ENCODE measurements at regions of chr13 and their contacts with region 1.

Region 1: DNA sequence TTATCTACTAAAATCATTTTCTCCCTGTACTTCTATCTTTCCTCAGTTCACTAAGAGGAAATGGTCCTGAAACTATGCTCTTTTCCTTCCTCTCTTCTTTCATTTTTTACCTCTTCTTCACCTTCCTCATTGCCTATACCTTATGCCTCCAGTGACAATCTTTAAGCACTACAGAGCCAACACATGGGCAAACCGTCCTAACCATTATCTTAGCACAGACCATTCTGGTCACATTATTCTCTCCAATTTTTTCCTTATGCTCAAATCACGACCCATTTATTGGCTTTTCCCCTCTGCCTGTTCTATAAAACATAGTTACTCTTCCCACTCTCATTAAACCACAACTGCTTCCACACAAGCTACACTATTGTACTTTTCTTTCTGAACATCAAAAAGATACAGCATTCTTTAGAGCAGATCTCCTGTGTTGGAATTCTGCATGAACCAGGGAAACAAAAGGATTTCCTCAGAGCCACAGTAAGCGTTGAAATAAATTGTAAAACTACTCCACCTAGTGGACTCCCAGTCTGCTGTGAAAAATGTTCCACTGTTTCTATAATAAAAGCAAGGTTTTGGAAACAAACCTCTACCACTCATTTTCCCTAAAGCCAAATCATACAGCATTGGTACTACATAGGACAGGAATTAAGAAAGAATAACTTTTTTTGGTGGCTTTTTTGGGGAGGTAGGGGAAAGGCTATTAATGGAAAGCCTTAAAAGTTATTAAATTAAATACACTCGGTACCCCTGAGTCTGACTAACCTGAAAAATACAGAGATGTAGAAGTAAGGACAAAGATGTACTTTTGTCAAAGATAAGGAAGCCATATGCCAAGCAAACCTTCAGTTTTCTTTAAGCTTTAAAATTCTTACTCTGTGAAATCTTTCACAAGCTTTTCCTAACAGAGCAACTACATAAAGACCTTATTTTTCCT is 19.5 kb downstream of the NUFIP1 start:
- DNase-seq: no peak
- H3K4me3 ChIP-seq: no peak overlapping the region
- H3K27ac ChIP-seq: peak overlapping the region in 1 of 3 donors; percentile 41
- H3K4me1 ChIP-seq: peaks cover 3 to 9% of the 10 kb centered on the region in 2 donors
- H3K27me3 ChIP-seq: no peaks in the 10 kb centered on the region
- CTCF ChIP-seq: peak; percentile 57 to 86 (median 75)
- POLR2A ChIP-seq: no peak

Region 2: GRCh38 chr13:44362394-44363040 is 607.3 kb before region 1 on chr13:
- intact Hi-C with region 1: no loop called
- DNase-seq: no peak
- H3K4me3 ChIP-seq: no peak overlapping the region
- H3K27ac ChIP-seq: no peak overlapping the region
- H3K4me1 ChIP-seq: no peaks in the 10 kb centered on the region
- H3K27me3 ChIP-seq: no peaks in the 10 kb centered on the region
- CTCF ChIP-seq: no peak
- POLR2A ChIP-seq: no peak

Region 3: GRCh38 chr13:44917589-44918325 is 52.1 kb before region 1 on chr13:
- intact Hi-C with region 1: loop called (anchors 10 kb)
- DNase-seq: peak; percentile 95 to 97
- H3K4me3 ChIP-seq: peak overlapping the region; percentile 23 to 77 (median 29)
- H3K27ac ChIP-seq: peak overlapping the region; percentile 95 to 100 (median 99)
- H3K4me1 ChIP-seq: peaks cover 29 to 30% of the 10 kb centered on the region in 2 donors
- H3K27me3 ChIP-seq: no peaks in the 10 kb centered on the region
- CTCF ChIP-seq: peak in 5 of 6 experiments; percentile 49 to 77 (median 62)
- POLR2A ChIP-seq: peak in 1 of 2 donors; percentile 45

Region 4: GRCh38 chr13:45007823-45008222 is 38.0 kb after region 1 on chr13:
- intact Hi-C with region 1: no loop called
- DNase-seq: no peak
- H3K4me3 ChIP-seq: no peak overlapping the region
- H3K27ac ChIP-seq: no peak overlapping the region
- H3K4me1 ChIP-seq: no peaks in the 10 kb centered on the region
- H3K27me3 ChIP-seq: no peaks in the 10 kb centered on the region
- CTCF ChIP-seq: no peak
- POLR2A ChIP-seq: no peak

Measured in thyroid gland (tissue), 4 donors.